ENCODE measurements at regions of chr6 and their contacts with region 1.

Region 1: GRCh38 chr6:89940225-89941027 is 46.2 kb downstream of the GJA10 start:
- DNase-seq: peak; percentile 40 to 87 (median 69)
- ATAC-seq: peak; percentile 80 to 93 (median 88)
- H3K4me3 ChIP-seq: no peak overlapping the region
- H3K4me3 Mint-ChIP-seq: no peak overlapping the region
- H3K27ac ChIP-seq: no peak overlapping the region
- H3K27ac Mint-ChIP-seq: peak overlapping the region; percentile 3 to 86
- H3K4me1 ChIP-seq: peaks cover 3 to 11% of the 10 kb centered on the region in 2 experiments
- H3K4me1 Mint-ChIP-seq: peaks cover 26 to 43% (median 39%) of the 10 kb centered on the region in 3 donors
- H3K27me3 ChIP-seq: no peaks in the 10 kb centered on the region
- H3K27me3 Mint-ChIP-seq: no peaks in the 10 kb centered on the region

Region 2: GRCh38 chr6:88020439-88020838 is 1920.0 kb before region 1 on chr6:
- CTCF ChIA-PET with region 1: no interaction called
- POLR2A ChIA-PET with region 1: no interaction called
- DNase-seq: no peak
- ATAC-seq: no peak
- H3K4me3 ChIP-seq: no peak overlapping the region
- H3K4me3 Mint-ChIP-seq: no peak overlapping the region
- H3K27ac ChIP-seq: no peak overlapping the region
- H3K27ac Mint-ChIP-seq: no peak overlapping the region
- H3K4me1 ChIP-seq: no peaks in the 10 kb centered on the region
- H3K4me1 Mint-ChIP-seq: no peaks in the 10 kb centered on the region
- H3K27me3 ChIP-seq: no peaks in the 10 kb centered on the region
- H3K27me3 Mint-ChIP-seq: peaks cover 4 to 5% of the 10 kb centered on the region in 2 donors

Region 3: DNA sequence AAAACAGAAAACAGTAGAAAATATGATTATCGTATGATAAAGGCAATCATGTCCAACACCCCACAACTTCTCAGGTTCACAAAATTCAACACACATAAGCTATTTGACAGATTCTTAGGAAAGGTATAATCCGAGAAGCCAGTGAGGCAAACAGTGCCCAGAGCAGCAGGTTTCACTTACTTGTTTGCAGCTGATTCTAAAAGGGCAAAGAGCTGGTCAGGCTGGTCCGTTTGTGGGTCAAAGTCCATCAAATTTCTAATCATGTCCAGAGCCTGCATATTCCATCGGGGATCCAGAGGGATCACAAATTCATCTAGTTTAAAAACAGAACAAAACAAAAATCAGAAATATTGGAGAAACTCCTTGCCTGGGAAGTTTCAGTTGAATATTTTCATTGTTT is 232.1 kb before region 1 on chr6:
- CTCF ChIA-PET with region 1: no interaction called
- POLR2A ChIA-PET with region 1: no interaction called
- DNase-seq: no peak
- ATAC-seq: no peak
- H3K4me3 ChIP-seq: no peak overlapping the region
- H3K4me3 Mint-ChIP-seq: no peak overlapping the region
- H3K27ac ChIP-seq: no peak overlapping the region
- H3K27ac Mint-ChIP-seq: no peak overlapping the region
- H3K4me1 ChIP-seq: no peaks in the 10 kb centered on the region
- H3K4me1 Mint-ChIP-seq: no peaks in the 10 kb centered on the region
- H3K27me3 ChIP-seq: no peaks in the 10 kb centered on the region
- H3K27me3 Mint-ChIP-seq: no peaks in the 10 kb centered on the region

Region 4: GRCh38 chr6:89819336-89820130 is 120.9 kb before region 1 on chr6 and contains the start of gene MDN1:
- CTCF ChIA-PET with region 1: interaction called, 5 to 10 read pairs
- POLR2A ChIA-PET with region 1: no interaction called
- DNase-seq: peak; percentile 71 to 96 (median 82)
- ATAC-seq: peak; percentile 95 to 97 (median 96)
- H3K4me3 ChIP-seq: peak within 1 kb of the TSS; percentile 86 to 96
- H3K4me3 Mint-ChIP-seq: peak within 1 kb of the TSS; percentile 93 to 96 (median 95)
- H3K27ac ChIP-seq: peak within 1 kb of the TSS; percentile 56
- H3K27ac Mint-ChIP-seq: peak within 1 kb of the TSS; percentile 93 to 97
- H3K4me1 ChIP-seq: peaks cover 10 to 25% of the 10 kb centered on the region in 2 experiments
- H3K4me1 Mint-ChIP-seq: peaks cover 36 to 42% (median 40%) of the 10 kb centered on the region in 3 donors
- H3K27me3 ChIP-seq: no peaks in the 10 kb centered on the region
- H3K27me3 Mint-ChIP-seq: no peaks in the 10 kb centered on the region
- total RNA-seq, gene MDN1: 56.0 to 64.9 (median 60.8) TPM

Region 5: DNA sequence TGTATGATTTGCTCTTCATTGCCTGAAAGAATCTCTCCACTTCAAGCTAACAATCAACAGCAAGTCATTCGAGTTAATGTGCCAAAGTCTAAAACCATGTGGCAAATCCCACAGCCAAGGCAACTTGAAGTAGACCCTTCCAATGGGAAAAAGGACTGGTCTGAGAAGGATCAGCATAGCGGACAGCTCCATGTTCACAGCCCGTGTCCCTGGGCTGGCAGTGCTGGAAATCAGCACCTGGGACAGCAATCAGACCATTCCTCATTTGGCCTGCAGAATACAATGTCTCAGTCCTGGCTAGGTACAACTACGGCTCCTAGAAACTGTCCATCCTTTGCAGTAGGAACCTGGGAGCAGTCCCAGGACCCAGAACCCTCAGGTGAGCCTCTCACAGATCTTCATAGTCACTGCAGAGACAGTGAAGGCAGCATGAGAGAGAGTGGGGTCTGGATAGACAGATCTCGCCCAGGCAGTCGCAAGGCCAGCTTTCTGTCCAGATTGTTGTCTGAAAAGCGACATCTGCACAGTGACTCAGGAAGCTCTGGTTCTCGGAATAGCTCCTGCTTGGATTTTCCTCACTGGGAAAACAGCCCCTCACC is 45.1 kb before region 1 on chr6:
- CTCF ChIA-PET with region 1: no interaction called
- POLR2A ChIA-PET with region 1: no interaction called
- DNase-seq: no peak
- ATAC-seq: no peak
- H3K4me3 ChIP-seq: no peak overlapping the region
- H3K4me3 Mint-ChIP-seq: no peak overlapping the region
- H3K27ac ChIP-seq: no peak overlapping the region
- H3K27ac Mint-ChIP-seq: no peak overlapping the region
- H3K4me1 ChIP-seq: no peaks in the 10 kb centered on the region
- H3K4me1 Mint-ChIP-seq: peaks cover 4 to 7% (median 5%) of the 10 kb centered on the region in 3 donors
- H3K27me3 ChIP-seq: peaks cover 0 to 27% of the 10 kb centered on the region in 2 experiments
- H3K27me3 Mint-ChIP-seq: peaks cover 36 to 38% of the 10 kb centered on the region in 2 donors

Region 6: GRCh38 chr6:89970609-89971337 is 30.3 kb after region 1 on chr6:
- CTCF ChIA-PET with region 1: interaction called, 5 to 10 read pairs
- POLR2A ChIA-PET with region 1: interaction called in 1 of 2 experiments, 4 read pairs
- DNase-seq: peak in 12 of 35 experiments; percentile 10 to 59 (median 16)
- ATAC-seq: peak in 3 of 4 experiments; percentile 27 to 66 (median 62)
- H3K4me3 ChIP-seq: no peak overlapping the region
- H3K4me3 Mint-ChIP-seq: no peak overlapping the region
- H3K27ac ChIP-seq: no peak overlapping the region
- H3K27ac Mint-ChIP-seq: no peak overlapping the region
- H3K4me1 ChIP-seq: peaks cover 2 to 7% of the 10 kb centered on the region in 2 experiments
- H3K4me1 Mint-ChIP-seq: peaks cover 25 to 40% (median 29%) of the 10 kb centered on the region in 3 donors
- H3K27me3 ChIP-seq: no peaks in the 10 kb centered on the region
- H3K27me3 Mint-ChIP-seq: no peaks in the 10 kb centered on the region

Region 7: DNA sequence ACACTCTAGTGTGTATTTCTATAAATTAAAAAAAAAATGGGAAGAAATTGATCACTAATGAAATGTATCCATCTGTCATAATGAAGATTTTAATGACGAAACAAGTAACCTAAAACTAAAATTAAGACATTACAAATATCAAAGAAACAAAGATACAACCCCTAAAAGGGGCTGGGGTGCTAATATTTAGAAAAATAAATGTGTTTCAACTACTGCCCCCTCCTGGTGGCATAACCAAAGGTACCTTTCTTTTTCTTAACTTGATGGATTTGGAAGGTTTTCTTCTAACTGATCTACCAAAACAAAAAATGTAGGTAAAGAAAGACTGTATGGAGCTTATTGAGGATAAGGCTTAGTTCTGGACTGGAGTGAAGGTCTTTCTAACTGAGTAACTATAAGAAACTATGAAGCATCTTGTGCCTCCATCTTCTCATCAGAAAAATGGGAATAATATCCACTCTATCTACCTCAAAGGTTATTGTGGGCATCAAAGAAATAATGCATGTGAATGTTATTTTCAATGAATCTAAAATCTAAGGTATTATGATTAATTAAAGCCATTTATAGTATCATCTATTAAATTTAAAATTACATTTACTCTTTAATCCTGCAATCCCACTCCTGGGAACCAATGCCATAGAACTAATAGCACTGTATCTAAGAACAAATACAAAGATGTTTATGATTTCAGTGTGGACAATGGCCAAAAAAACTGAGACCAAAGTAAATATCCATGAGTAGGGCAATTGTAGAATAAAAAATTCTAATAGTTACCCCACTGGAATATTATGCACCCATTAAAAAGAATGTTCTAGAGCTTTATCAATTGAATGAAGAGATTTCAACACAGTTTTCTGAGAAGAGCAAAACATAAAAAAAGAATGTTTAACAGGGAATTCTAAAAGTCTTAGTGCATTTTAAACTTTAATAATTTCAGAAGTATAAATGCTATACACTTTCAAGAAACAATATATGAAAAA is 239.1 kb after region 1 on chr6:
- CTCF ChIA-PET with region 1: interaction called, 7 to 27 read pairs
- POLR2A ChIA-PET with region 1: no interaction called
- DNase-seq: peak in 13 of 35 experiments; percentile 15 to 64 (median 32)
- ATAC-seq: no peak
- H3K4me3 ChIP-seq: no peak overlapping the region
- H3K4me3 Mint-ChIP-seq: peak overlapping the region in 1 of 3 donors; percentile 55
- H3K27ac ChIP-seq: peak overlapping the region; percentile 28
- H3K27ac Mint-ChIP-seq: peak overlapping the region; percentile 40 to 92
- H3K4me1 ChIP-seq: peaks cover 39 to 56% of the 10 kb centered on the region in 2 experiments
- H3K4me1 Mint-ChIP-seq: peaks cover 78 to 81% (median 81%) of the 10 kb centered on the region in 3 donors
- H3K27me3 ChIP-seq: no peaks in the 10 kb centered on the region
- H3K27me3 Mint-ChIP-seq: no peaks in the 10 kb centered on the region

Region 8: GRCh38 chr6:90285611-90286381 is 345.4 kb after region 1 on chr6:
- CTCF ChIA-PET with region 1: interaction called, 3 to 10 read pairs
- POLR2A ChIA-PET with region 1: no interaction called
- DNase-seq: peak in 23 of 35 experiments; percentile 21 to 68 (median 34)
- ATAC-seq: peak; percentile 61 to 67 (median 62)
- H3K4me3 ChIP-seq: peak overlapping the region; percentile 39 to 67
- H3K4me3 Mint-ChIP-seq: peak overlapping the region; percentile 78 to 90 (median 84)
- H3K27ac ChIP-seq: peak overlapping the region; percentile 70
- H3K27ac Mint-ChIP-seq: peak overlapping the region; percentile 94 to 98
- H3K4me1 ChIP-seq: peaks cover 36 to 73% of the 10 kb centered on the region in 2 experiments
- H3K4me1 Mint-ChIP-seq: peaks cover 91 to 98% (median 92%) of the 10 kb centered on the region in 3 donors
- H3K27me3 ChIP-seq: no peaks in the 10 kb centered on the region
- H3K27me3 Mint-ChIP-seq: no peaks in the 10 kb centered on the region

Region 9: DNA sequence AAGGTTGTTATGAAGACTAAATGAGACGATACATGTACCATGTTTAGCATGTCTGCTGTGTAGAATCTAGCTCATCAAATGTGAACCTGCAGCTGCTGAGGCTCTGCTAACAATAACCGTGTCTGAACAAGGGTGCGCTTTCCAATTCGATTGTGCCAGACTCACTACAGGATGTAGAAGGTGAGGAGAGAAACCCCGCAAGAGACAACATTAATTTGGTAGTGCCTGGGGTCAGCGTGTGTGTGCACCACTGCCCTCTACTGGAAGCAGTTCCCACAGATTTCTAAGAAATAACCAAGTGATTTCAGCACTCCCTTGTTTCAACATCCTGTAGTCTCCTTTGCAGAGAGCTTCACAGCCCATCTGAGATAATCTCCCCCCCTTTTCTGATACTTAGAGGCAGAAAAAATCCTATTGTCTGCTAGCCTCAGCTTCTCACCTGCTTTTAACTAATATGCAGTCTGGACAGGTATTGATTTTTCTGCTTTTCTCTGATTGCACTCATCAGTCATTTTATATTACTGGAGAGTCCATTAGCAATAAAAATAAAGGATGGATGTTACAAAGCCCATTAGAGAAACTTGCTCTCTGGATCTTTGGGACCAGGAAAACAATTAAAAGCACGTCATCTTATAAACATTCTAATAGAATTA is 452.9 kb after region 1 on chr6:
- CTCF ChIA-PET with region 1: interaction called, 13 to 24 read pairs
- POLR2A ChIA-PET with region 1: no interaction called
- DNase-seq: peak; percentile 47 to 87 (median 70)
- ATAC-seq: peak; percentile 62 to 69 (median 66)
- H3K4me3 ChIP-seq: no peak overlapping the region
- H3K4me3 Mint-ChIP-seq: no peak overlapping the region
- H3K27ac ChIP-seq: no peak overlapping the region
- H3K27ac Mint-ChIP-seq: peak overlapping the region; percentile 19 to 52
- H3K4me1 ChIP-seq: peaks cover 19 to 24% of the 10 kb centered on the region in 2 experiments
- H3K4me1 Mint-ChIP-seq: peaks cover 30 to 39% (median 38%) of the 10 kb centered on the region in 3 donors
- H3K27me3 ChIP-seq: no peaks in the 10 kb centered on the region
- H3K27me3 Mint-ChIP-seq: no peaks in the 10 kb centered on the region